Mammary epithelial cell (primary cell): ENCODE measurements at regions of chr14 and their contacts with region 1.

Region 1: DNA sequence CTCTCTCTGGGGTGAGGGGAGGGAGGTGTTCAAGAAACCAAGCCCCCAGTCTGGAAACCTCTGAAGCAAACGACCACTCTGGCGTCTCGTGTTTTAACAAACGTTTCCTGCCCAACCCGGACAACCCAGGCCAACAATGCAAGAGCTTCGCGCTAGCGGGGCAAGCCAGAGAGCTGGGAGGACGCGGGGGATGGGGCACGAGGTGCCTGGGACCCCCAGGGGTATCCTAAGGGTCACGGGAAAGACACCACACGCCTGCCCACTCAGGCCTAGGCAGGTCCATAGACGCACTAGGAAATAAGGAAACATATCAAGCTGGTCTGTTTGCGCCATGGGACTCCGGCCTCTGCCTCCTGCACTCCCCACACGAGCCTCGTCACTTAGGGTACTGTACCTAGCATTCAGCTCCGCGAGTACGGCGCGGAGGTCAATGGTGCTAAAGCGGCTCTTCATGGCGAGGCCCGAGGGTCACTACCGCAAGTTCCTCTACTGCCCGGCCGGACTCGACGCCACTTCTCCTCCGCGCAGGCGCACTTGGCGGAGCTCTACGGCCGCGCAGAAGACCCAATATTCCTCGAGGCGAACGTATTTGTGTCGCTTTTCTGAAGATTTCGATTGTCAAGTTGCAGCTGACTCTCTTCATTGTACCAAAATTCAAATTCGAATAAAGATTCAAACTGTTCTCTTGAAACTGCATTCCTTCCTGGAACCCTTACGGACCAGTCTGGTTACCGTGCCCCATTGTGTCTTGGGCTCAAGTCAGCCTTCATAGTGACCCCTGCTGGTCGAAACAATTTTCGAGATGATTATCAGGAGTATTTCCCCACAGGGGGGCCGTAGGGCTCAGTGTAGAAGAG is at the start of gene NEMF:
- DNase-seq: peak; percentile 83
- H3K4me3 ChIP-seq: peak within 1 kb of the TSS; percentile 54 to 96 (median 65)
- H3K27ac ChIP-seq: peak within 1 kb of the TSS; percentile 77
- H3K4me1 ChIP-seq: peaks cover 7% of the 10 kb centered on the region
- H3K27me3 ChIP-seq: no peaks in the 10 kb centered on the region
- CTCF ChIP-seq: peak; percentile 76 to 77
- total RNA-seq, gene NEMF: 44.8 to 57.7 TPM

Region 2: DNA sequence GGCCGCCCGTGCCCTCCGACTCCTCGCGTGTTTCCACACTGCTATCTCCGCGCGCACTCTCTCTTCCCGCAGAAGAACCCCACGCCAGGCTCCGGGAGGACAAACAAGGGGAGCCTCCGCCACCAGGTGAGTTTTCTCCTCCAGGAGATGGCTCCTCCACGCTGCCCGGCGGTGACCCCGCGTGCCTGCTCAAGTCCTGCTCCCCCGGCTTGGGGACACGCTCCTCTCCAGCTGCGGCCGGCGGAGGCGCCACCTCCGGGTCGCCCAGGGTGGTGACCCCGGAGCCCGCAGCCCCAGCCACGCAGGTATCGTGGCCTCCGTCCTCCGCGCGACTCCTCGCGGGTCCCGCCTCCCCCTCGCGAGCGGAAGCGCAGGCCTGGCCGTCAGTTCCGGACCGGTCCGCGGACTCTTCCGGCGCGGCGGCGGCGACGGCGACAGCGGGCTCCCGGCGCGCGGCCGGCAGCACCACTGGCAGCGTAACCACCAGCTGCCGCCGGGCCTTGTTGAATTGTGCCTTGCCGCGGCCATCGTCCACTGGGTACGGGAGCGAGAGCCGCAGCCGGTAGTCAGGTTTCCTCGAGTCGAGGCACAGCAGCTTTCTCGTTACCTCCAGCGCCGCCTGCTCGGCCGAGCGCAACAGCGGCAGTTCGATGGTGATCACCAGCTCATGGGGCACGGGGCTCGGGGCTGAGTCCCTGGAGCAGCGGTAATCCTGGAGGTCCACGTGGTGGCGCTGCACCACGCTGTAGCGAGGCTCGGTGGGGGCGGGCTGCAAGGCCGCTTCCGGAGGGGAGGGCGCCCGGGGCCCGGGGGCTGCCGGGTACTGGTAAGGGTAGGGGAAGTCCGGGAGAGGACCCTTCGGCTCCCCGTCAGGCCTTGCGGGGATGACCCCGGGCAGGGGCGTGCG is 218.6 kb before region 1 on chr14:
- CTCF ChIA-PET with region 1: interaction called, 6 read pairs
- dilution Hi-C with region 1: no loop called
- in situ Hi-C with region 1: no loop called
- intact Hi-C with region 1: loop called (anchors 2 kb)
- DNase-seq: peak; percentile 92
- H3K4me3 ChIP-seq: peak overlapping the region; percentile 91 to 94 (median 92)
- H3K27ac ChIP-seq: peak overlapping the region; percentile 94
- H3K4me1 ChIP-seq: no peaks in the 10 kb centered on the region
- H3K27me3 ChIP-seq: no peaks in the 10 kb centered on the region
- CTCF ChIP-seq: peak; percentile 57 to 83

Region 3: DNA sequence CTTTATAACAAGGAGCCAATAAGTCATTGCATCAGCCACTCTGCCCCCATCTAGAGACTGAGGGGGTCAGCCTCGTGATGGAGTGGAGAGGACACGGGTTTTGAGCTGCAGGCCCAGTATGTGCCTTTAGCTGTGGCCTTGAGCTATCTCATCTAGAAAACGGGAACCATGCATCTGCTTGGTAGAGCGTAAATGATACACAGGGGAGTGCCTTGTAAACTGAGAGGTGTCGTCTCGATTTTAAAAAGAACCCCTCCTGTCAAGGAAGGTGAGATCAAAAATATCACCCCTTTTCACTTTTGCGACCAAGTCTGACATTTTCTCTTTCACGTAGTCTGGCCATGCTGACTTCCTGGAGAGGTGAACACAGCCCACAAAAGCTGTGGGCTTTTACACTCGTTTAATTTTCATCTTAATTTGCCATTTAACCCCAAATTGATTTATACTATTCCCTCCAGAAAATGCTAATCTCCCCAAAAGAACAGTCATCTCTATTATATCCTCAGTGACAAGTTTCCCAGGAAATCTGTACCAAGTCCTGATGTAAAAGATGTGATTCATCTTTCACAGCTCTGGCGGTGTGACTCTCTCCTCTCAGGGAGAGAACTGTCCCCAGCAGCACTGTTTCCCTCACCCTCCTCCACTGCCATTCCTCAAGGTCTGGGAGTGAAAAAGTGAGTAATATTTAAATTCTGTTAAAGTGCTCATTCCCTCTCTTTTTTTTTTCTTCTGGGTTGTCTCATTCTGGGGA is 233.2 kb after region 1 on chr14:
- CTCF ChIA-PET with region 1: interaction called, 17 read pairs
- dilution Hi-C with region 1: no loop called
- in situ Hi-C with region 1: no loop called
- intact Hi-C with region 1: no loop called
- DNase-seq: peak; percentile 78
- H3K4me3 ChIP-seq: no peak overlapping the region
- H3K27ac ChIP-seq: no peak overlapping the region
- H3K4me1 ChIP-seq: peaks cover 30% of the 10 kb centered on the region
- H3K27me3 ChIP-seq: no peaks in the 10 kb centered on the region
- CTCF ChIP-seq: no peak

Region 4: GRCh38 chr14:50311975-50312733 is 459.6 kb after region 1 on chr14 and contains the starts of genes DMAC2L and L2HGDH:
- CTCF ChIA-PET with region 1: no interaction called
- dilution Hi-C with region 1: no loop called
- in situ Hi-C with region 1: no loop called
- intact Hi-C with region 1: loop called (anchors 1 kb)
- DNase-seq: peak; percentile 95
- H3K4me3 ChIP-seq: peak within 1 kb of the TSS; percentile 89 to 99 (median 96)
- H3K27ac ChIP-seq: peak within 1 kb of the TSS; percentile 86
- H3K4me1 ChIP-seq: peaks cover 9% of the 10 kb centered on the region
- H3K27me3 ChIP-seq: no peaks in the 10 kb centered on the region
- CTCF ChIP-seq: no peak
- total RNA-seq, gene DMAC2L: 8.7 to 12.9 TPM
- total RNA-seq, gene L2HGDH: 5.2 to 9.4 TPM